HEK293 (cell line): ENCODE measurements at regions of chr6 and their contacts with region 1.

Region 1: GRCh38 chr6:37314487-37315156 is 39.2 kb upstream of the RNF8 start:
- H3K4me3 ChIP-seq: no peak overlapping the region
- H3K27ac ChIP-seq: no peak overlapping the region
- H3K4me1 ChIP-seq: no peaks in the 10 kb centered on the region
- CTCF ChIP-seq: peak; percentile 52

Region 2: DNA sequence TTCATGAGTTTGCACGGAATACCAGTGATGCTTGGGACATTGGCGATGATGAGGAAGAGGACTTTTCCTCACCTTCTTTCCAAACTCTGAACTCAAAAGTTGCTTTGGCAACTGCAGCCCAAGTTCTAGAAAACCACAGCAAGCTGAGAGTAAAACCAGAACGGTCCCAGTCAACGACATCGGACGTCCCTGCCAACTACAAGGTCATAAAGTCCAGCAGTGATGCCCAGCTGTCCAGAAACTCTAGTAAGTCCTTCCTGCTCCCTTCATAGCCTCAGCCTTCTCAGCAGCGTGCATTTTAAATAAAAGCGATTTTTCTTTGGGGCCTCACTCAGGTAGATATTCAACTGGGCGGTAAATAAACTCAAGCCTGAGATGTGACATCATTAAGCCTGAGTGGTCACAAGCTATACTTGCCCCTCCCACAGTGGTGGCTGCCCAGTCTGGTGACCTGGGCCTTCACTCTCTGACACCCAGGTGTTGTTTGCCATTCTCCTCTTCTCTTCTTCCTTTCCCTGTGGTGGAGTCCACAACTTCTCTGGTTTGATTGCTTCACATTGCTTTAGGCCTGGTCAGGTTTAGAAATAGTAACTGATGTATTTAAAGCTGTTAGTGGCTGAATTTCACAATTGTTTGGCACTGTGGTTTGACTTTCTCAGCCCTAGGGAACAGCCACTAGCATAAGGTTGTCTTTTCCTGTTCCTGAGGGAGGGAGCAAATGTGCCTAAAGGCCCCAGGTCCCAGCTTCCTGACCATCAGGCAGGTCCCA is 35.1 kb before region 1 on chr6:
- CTCF ChIA-PET with region 1: interaction called, 10 read pairs
- POLR2A ChIA-PET with region 1: no interaction called
- H3K4me3 ChIP-seq: no peak overlapping the region
- H3K27ac ChIP-seq: peak overlapping the region; percentile 17; the same call in 1 of the 2 replicates
- H3K4me1 ChIP-seq: peaks cover 9% of the 10 kb centered on the region
- CTCF ChIP-seq: no peak

Region 3: GRCh38 chr6:37289931-37290330 is 24.7 kb before region 1 on chr6:
- CTCF ChIA-PET with region 1: interaction called, 16 read pairs
- POLR2A ChIA-PET with region 1: no interaction called
- H3K4me3 ChIP-seq: no peak overlapping the region
- H3K27ac ChIP-seq: no peak overlapping the region
- H3K4me1 ChIP-seq: no peaks in the 10 kb centered on the region
- CTCF ChIP-seq: no peak

Region 4: GRCh38 chr6:37303932-37304363 is 10.7 kb before region 1 on chr6:
- CTCF ChIA-PET with region 1: interaction called, 57 read pairs
- POLR2A ChIA-PET with region 1: no interaction called
- H3K4me3 ChIP-seq: no peak overlapping the region
- H3K27ac ChIP-seq: no peak overlapping the region
- H3K4me1 ChIP-seq: peaks cover 5% of the 10 kb centered on the region
- CTCF ChIP-seq: peak; percentile 61; the same call in 1 of the 2 replicates